Posterior vena cava (tissue), 2 donors: ENCODE measurements at regions of chr7 and their contacts with region 1.

Region 1: GRCh38 chr7:102310414-102310815 is 23.7 kb downstream of the SH2B2 start:
- DNase-seq: no peak

Region 2: DNA sequence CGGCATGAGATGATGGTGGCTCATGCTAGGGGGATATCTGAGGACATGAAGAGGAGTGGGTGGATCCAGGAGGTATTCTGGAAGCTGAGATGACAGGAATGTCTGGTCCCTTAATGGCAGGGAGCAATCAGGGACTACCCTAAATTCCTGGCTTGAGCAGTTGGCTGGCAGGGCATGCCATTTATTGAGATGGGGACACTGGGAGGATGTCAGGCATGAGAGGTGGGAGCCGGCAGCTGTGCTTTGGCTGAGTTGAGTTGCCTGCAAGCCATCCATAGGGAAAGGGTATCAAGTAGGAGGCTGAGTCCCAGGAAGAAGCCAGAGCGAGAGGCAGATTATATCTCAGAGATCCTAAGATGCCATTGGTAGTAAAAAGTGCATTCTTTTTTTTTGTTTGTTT is 878.1 kb before region 1 on chr7:
- intact Hi-C with region 1: loop called in 1 of 2 experiments (anchors 5 kb)
- DNase-seq: no peak

Region 3: GRCh38 chr7:102258749-102259107 is 51.7 kb before region 1 on chr7:
- intact Hi-C with region 1: loop called in 1 of 2 experiments (anchors 2 kb)
- DNase-seq: no peak